ENCODE measurements at regions of chr1 and their contacts with region 1.

Region 1: GRCh38 chr1:206982216-206982615 is 12.0 kb upstream of the FCAMR start:
- DNase-seq: peak; percentile 72
- H3K4me3 ChIP-seq: no peak overlapping the region
- H3K27ac ChIP-seq: no peak overlapping the region
- H3K4me1 ChIP-seq: peaks cover 4% of the 10 kb centered on the region
- H3K27me3 ChIP-seq: no peaks in the 10 kb centered on the region
- CTCF ChIP-seq: peak; percentile 63

Region 2: GRCh38 chr1:206734499-206735142 is 247.6 kb before region 1 on chr1:
- intact Hi-C with region 1: loop called (anchors 5 kb)
- DNase-seq: peak; percentile 75
- H3K4me3 ChIP-seq: no peak overlapping the region
- H3K27ac ChIP-seq: no peak overlapping the region
- H3K4me1 ChIP-seq: no peaks in the 10 kb centered on the region
- H3K27me3 ChIP-seq: no peaks in the 10 kb centered on the region
- CTCF ChIP-seq: peak; percentile 77

Region 3: GRCh38 chr1:206808615-206809014 is 173.6 kb before region 1 on chr1:
- intact Hi-C with region 1: loop called (anchors 5 kb)
- DNase-seq: no peak
- H3K4me3 ChIP-seq: no peak overlapping the region
- H3K27ac ChIP-seq: no peak overlapping the region
- H3K4me1 ChIP-seq: no peaks in the 10 kb centered on the region
- H3K27me3 ChIP-seq: no peaks in the 10 kb centered on the region
- CTCF ChIP-seq: no peak

Region 4: GRCh38 chr1:206865013-206865671 is 117.1 kb before region 1 on chr1 and contains the start of gene IL20:
- intact Hi-C with region 1: loop called (anchors 5 kb)
- DNase-seq: peak; percentile 83
- H3K4me3 ChIP-seq: no peak within 1 kb of the TSS
- H3K27ac ChIP-seq: no peak within 1 kb of the TSS
- H3K4me1 ChIP-seq: no peaks in the 10 kb centered on the region
- H3K27me3 ChIP-seq: no peaks in the 10 kb centered on the region
- CTCF ChIP-seq: peak; percentile 89
- total RNA-seq, gene IL20: not detected

Region 5: DNA sequence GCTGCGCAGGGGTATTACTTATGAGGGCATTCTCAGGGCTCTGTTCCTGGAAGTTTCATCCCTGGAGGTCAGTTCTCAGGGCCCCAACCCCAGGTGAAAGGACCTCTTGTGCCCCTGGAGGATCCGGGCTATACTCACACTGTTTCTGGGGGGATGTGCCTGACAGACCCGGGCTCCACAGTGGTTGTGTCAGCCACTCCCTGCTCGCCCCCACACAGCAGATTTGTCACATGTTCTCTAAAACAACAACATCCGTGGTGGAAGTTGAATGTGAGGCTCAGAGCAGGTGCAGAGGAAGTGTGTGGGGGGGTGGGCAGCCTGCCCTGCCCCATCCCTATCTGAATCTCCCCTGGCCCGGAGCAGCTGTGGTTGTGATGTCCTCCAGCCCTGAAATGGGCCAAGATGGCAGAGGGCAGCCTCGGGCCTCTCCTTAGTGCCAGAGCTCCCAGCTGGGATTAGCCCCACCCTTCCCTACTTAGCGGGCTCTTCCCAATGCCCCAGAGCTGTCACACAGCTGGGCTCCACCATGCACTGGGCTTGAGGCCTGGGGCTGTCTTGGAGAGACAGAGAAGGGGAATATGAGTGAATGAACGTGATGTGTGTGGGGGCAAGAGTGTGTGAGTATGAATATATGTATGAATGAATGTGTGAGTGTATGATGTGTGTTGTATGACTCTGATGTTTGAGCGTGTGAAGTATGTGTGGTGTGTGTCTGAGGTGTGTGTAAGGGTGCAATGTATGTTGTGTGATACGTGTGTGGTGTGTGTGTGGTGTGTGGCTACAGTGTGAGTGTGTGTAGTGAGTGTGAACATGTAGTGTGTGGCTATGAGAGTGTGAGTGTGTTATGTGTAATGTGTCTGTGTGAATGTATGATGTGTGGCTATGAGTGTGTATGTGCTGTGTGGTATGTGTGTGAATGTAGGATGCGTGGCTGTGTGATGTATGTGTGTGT is 58.9 kb before region 1 on chr1:
- intact Hi-C with region 1: loop called (anchors 5 kb)
- DNase-seq: no peak
- H3K4me3 ChIP-seq: no peak overlapping the region
- H3K27ac ChIP-seq: peak overlapping the region; percentile 67
- H3K4me1 ChIP-seq: peaks cover 8% of the 10 kb centered on the region
- H3K27me3 ChIP-seq: no peaks in the 10 kb centered on the region
- CTCF ChIP-seq: no peak

Region 6: DNA sequence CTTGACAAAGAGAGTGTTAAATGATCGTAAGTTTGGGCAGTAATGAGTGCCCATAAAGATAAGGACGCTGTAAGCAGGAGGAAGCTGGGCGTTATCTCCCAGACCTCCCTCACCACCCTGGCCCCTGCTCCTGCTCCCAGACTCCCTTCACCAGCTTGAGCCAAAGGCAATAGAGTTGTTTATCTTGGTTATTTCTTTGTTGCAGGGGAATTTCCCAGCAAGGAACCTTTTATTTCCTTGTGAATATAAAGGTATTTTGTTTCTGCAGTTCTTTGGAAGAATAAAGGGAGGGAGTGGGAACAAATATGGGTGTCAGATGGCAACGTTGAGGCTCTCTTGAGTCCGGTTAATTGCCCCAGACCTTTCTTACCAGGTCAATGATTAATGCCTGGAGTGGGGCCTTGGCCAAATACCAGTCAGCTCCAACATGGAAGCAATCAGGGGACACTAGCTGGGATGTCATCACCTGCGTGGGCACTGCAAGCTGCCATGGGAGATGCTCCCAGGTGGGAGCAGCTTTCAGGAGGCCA is 40.3 kb before region 1 on chr1:
- intact Hi-C with region 1: loop called (anchors 5 kb)
- DNase-seq: peak; percentile 82
- H3K4me3 ChIP-seq: peak overlapping the region; percentile 61
- H3K27ac ChIP-seq: peak overlapping the region; percentile 91
- H3K4me1 ChIP-seq: no peaks in the 10 kb centered on the region
- H3K27me3 ChIP-seq: no peaks in the 10 kb centered on the region
- CTCF ChIP-seq: no peak

Region 7: DNA sequence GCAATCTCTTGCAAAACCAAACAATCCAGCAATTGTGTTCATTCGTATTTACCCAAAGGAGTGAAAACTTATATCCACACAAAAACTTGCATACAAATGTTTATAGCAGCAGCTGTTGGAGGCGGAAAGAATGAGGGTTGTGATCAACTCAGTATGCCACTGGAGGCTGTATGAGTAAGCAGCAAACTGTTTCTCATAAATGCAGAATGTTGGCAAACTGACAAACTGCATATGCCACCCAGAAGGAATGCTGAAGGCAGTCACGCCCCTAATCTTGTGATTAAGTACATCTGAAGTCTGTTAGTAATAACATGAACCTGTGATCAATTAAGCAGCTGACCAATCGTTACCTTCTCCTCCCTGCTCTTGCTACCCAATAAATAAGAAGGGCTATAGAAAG is 411.4 kb after region 1 on chr1:
- intact Hi-C with region 1: no loop called
- DNase-seq: no peak
- H3K4me3 ChIP-seq: no peak overlapping the region
- H3K27ac ChIP-seq: no peak overlapping the region
- H3K4me1 ChIP-seq: no peaks in the 10 kb centered on the region
- H3K27me3 ChIP-seq: no peaks in the 10 kb centered on the region
- CTCF ChIP-seq: no peak